ENCODE measurements at regions of chrX and their contacts with region 1.

Region 1: DNA sequence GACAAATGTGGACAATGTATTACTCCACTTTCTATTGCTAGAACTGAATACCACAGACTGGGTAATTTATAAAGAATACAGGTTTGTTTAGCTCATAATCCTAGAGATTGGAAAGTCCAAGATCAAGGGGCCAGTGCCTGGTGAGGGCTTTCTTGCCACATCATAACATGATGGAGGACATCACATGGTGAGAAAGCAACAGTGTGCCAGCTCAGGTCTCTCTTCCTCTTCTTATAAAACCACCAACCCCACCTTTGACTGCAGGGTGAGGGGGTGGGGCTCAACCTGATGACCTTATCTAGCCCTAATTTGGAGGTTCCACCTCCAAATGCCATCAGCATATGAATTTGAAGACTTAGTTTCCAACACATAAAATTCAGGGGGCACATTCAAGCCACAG is 105.7 kb upstream of the CXorf66 start:
- DNase-seq: no peak
- H3K4me3 ChIP-seq: no peak overlapping the region
- H3K27ac ChIP-seq: no peak overlapping the region
- H3K4me1 ChIP-seq: no peaks in the 10 kb centered on the region
- H3K27me3 ChIP-seq: no peaks in the 10 kb centered on the region
- CTCF ChIP-seq: no peak

Region 2: DNA sequence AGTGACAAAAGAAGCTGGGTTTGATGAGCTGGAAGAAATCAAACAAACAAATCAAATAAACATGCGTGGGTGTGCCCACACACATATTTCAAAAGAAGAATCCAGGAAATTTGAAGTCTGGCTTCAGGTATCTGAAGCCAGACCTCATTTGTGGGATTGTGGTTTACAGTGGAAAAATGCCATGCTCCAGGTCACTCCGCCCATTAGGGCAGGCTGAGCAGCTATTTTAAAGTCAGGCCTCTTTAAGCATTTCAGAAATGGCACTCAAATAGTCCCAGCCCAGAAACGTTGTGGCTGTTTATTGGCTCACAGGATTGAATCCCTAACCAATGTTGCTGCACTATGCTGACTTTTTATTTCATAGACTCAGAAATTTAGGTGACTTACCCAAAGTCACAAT is 766.5 kb before region 1 on chrX:
- intact Hi-C with region 1: no loop called
- DNase-seq: no peak
- H3K4me3 ChIP-seq: no peak overlapping the region
- H3K27ac ChIP-seq: no peak overlapping the region
- H3K4me1 ChIP-seq: no peaks in the 10 kb centered on the region
- H3K27me3 ChIP-seq: no peaks in the 10 kb centered on the region
- CTCF ChIP-seq: no peak

Region 3: GRCh38 chrX:139982856-139983255 is 88.2 kb before region 1 on chrX:
- intact Hi-C with region 1: no loop called
- DNase-seq: no peak
- H3K4me3 ChIP-seq: no peak overlapping the region
- H3K27ac ChIP-seq: no peak overlapping the region
- H3K4me1 ChIP-seq: no peaks in the 10 kb centered on the region
- H3K27me3 ChIP-seq: no peaks in the 10 kb centered on the region
- CTCF ChIP-seq: no peak

Region 4: GRCh38 chrX:140141444-140142029 is 70.5 kb after region 1 on chrX:
- intact Hi-C with region 1: loop called (anchors 2 kb)
- DNase-seq: no peak
- H3K4me3 ChIP-seq: no peak overlapping the region
- H3K27ac ChIP-seq: no peak overlapping the region
- H3K4me1 ChIP-seq: no peaks in the 10 kb centered on the region
- H3K27me3 ChIP-seq: no peaks in the 10 kb centered on the region
- CTCF ChIP-seq: peak in 2 of 3 experiments; percentile 51 to 68